ENCODE measurements at regions of chr1 and their contacts with region 1.

Region 1: DNA sequence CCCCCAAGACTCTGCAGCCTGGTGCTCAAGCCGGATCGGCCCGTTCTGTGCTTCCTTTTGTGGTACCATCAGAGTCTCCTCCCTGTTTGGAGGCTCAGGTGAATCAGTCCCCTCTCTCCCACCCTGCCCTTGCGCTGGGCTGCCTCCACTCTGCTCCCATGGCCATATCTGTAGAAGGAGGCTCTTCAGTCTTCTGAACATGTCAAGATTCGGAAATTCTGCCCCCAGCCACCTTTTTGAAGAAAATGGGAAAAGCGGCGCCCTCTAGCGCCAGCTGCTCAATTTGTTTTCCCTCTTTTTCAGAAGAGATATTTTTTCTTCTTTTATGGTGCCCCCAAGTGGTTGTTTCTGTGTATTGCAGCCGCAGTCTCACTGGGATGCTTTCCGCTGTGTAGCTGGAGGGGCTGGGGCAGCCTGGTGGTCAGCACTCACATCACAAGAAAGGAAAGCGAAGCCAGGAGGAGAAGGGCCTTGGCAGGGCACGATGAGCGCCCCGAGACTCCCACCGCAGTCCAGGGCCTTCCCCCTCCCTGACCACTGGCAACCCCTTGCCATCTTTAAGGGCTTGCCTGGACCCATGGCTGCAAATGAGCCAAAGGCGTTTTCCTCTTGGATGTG is 58.4 kb upstream of the CACNA1E start:
- DNase-seq: peak; percentile 47 to 83
- ATAC-seq: peak; percentile 56

Region 2: DNA sequence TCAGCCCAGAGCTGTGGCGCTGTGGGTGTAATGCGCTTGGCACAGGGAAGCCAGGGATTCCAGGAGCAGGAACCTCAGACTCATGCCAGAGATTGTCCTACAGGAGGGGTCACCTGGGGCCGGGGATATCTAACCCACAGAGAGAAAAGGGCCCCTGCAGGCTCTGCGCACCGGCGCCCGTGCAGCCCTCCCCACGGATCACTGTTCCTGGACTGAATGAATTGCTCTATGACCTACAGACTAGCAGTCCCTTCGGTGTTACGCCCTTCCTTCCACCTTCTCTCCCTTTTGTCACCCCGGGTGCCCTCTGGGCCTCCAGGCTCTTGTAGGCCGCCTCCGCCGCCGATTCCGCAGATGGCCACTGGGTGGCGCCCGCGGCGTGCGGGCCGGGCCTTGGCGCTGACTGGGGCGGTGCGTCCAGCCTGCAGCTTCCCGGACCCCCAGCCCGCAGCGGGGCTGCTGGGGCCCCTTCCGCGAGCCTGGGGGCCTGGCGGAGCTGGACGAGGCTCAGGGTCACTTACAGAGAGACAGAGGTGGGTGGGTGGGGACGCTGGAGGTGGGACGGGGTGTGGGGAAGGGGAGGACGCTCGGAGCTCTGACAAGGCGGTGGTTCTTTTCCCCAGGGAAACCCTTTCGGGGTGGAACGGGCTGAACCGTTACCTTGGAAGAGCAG is 235.1 kb before region 1 on chr1:
- intact Hi-C with region 1: loop called (anchors 5 kb)
- DNase-seq: peak; percentile 45 to 68
- ATAC-seq: peak; percentile 94

Region 3: GRCh38 chr1:181531951-181532600 is 107.2 kb after region 1 on chr1:
- intact Hi-C with region 1: no loop called
- DNase-seq: no peak
- ATAC-seq: peak; percentile 36

Measured in left colon (tissue), 2 donors.